PC-9 (cell line): ENCODE measurements at regions of chr15 and their contacts with region 1.

Region 1: GRCh38 chr15:78131295-78132061 is at the start of gene CIB2:
- DNase-seq: peak; percentile 49 to 72
- H3K4me3 ChIP-seq: peak within 1 kb of the TSS; percentile 93
- H3K27ac ChIP-seq: no peak within 1 kb of the TSS
- H3K4me1 ChIP-seq: peaks cover 36% of the 10 kb centered on the region
- H3K27me3 ChIP-seq: no peaks in the 10 kb centered on the region
- CTCF ChIP-seq: peak; percentile 70
- total RNA-seq, gene CIB2: 5.6 and 5.8 TPM in 2 replicates

Region 2: GRCh38 chr15:77966540-77967290 is 164.8 kb before region 1 on chr15:
- CTCF ChIA-PET with region 1: interaction called, 14 read pairs
- POLR2A ChIA-PET with region 1: no interaction called
- intact Hi-C with region 1: no loop called
- DNase-seq: peak in 1 of 2 experiments; percentile 38
- H3K4me3 ChIP-seq: no peak overlapping the region
- H3K27ac ChIP-seq: no peak overlapping the region
- H3K4me1 ChIP-seq: peaks cover 13% of the 10 kb centered on the region
- H3K27me3 ChIP-seq: no peaks in the 10 kb centered on the region
- CTCF ChIP-seq: peak; percentile 87

Region 3: DNA sequence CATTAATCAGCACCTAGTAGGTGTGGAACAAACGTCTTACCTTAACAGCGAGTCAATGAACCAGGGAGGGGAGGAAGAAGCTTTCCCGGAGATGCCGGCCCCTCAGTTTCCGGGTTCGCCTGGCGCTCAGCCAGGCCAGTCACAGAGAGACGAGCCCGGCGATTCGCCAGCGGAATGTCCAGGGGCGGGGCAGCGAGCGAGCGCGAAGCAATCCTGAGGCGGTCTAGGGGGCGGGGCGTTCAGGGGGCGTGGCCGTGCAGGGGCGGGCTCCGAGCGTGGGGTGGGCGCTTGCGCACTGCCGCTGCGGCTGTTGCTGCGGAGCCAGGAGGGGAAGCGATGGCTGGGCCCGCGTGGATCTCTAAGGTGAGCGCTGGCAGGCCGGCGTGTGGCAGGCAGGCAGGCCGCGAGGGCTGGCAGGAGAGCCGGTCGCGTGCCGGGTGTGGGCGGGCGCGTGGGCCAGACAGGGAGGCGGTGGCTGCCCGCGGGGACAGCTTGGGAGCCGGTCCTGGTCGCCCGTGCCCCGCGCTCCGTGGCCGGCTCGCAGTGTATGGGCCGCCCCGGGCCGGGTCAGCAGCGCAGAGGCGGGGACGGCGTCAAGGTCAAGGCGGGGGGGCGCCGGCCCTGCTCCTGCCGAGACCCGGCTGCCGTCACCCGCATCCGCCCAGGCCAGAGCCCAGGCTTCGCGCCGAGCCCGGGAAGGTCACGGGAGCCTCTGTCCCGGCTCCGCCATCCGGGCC is 17.8 kb after region 1 on chr15 and contains the start of gene IDH3A:
- CTCF ChIA-PET with region 1: interaction called, 9 read pairs
- POLR2A ChIA-PET with region 1: no interaction called
- intact Hi-C with region 1: loop called (anchors 1 kb)
- DNase-seq: peak; percentile 84 to 98
- H3K4me3 ChIP-seq: peak within 1 kb of the TSS; percentile 90
- H3K27ac ChIP-seq: peak within 1 kb of the TSS; percentile 52
- H3K4me1 ChIP-seq: peaks cover 20% of the 10 kb centered on the region
- H3K27me3 ChIP-seq: no peaks in the 10 kb centered on the region
- CTCF ChIP-seq: no peak
- total RNA-seq, gene IDH3A: 64.8 and 67.8 TPM in 2 replicates

Region 4: GRCh38 chr15:78177447-78177873 is 46.0 kb after region 1 on chr15:
- CTCF ChIA-PET with region 1: interaction called, 3 read pairs
- POLR2A ChIA-PET with region 1: no interaction called
- intact Hi-C with region 1: loop called (anchors 5 kb)
- DNase-seq: peak in 1 of 2 experiments; percentile 57
- H3K4me3 ChIP-seq: no peak overlapping the region
- H3K27ac ChIP-seq: no peak overlapping the region
- H3K4me1 ChIP-seq: no peaks in the 10 kb centered on the region
- H3K27me3 ChIP-seq: no peaks in the 10 kb centered on the region
- CTCF ChIP-seq: peak; percentile 85

Region 5: GRCh38 chr15:78195735-78196201 is 64.3 kb after region 1 on chr15:
- CTCF ChIA-PET with region 1: interaction called, 6 read pairs
- POLR2A ChIA-PET with region 1: no interaction called
- intact Hi-C with region 1: loop called (anchors 5 kb)
- DNase-seq: peak; percentile 46 to 53
- H3K4me3 ChIP-seq: no peak overlapping the region
- H3K27ac ChIP-seq: no peak overlapping the region
- H3K4me1 ChIP-seq: no peaks in the 10 kb centered on the region
- H3K27me3 ChIP-seq: no peaks in the 10 kb centered on the region
- CTCF ChIP-seq: peak; percentile 81